Activated CD8-positive, alpha-beta T cell treated with anti-CD3 and anti-CD28 coated beads for 36 hours (primary cell): ENCODE measurements at regions of chr4 and their contacts with region 1.

Region 1: GRCh38 chr4:6546681-6547447 is 28.1 kb upstream of the MAN2B2 start:
- DNase-seq: peak; percentile 66
- ATAC-seq: peak; percentile 69
- H3K4me3 Mint-ChIP-seq: no peak overlapping the region
- H3K27ac Mint-ChIP-seq: no peak overlapping the region
- H3K4me1 Mint-ChIP-seq: no peaks in the 10 kb centered on the region
- H3K27me3 Mint-ChIP-seq: peaks cover 19% of the 10 kb centered on the region
- CTCF ChIP-seq: peak; percentile 91

Region 2: DNA sequence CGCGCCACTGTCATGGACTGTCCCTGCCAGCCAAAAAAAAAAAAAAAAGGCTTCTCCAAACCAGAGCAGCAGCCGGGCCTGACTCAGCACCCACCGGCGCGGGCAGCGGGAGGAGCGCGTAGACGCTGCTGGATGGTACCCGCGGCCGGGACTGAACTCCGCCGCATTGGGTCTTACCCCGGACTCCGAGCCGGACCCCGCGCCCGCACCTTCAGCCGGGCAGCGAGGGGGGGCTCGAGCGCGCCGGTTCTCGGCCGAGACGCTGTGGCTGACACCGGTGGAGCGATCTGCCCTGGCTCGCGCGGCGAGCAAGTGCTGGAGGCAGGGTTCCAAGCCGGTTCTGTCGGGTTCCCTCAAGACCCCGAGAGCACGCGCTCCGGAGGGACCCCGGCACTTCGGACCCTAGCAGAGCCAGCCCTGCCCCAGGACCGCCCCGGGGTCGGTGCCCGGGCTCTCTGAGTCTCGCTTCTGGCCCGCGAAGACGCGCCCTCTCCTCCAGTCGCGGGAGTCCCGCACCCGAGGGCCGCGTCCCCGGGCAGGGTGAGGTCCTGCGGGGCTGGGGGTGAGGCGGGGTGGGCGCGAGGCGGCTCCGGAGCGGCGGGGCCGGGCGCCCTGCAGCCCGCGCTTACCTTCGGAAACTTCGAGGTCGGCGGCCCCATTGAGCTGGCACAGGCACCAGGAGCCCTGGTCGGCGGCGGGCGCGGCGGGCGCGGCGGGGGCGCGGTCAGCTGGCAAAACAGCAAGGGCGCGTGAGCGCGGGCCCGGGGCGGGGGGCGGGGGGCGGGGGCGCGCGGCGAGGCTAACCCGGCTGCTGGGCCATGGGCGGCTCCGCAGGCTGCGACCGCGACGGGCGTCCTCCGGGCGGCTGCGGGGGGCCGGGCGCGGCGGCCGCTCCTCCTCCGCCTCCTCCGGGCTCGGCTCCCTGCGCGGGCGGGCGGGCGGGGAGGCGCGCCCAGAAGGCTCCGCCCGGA is 16.4 kb after region 1 on chr4:
- CTCF ChIA-PET with region 1: interaction called, 15 read pairs
- POLR2A ChIA-PET with region 1: no interaction called
- intact Hi-C with region 1: no loop called
- DNase-seq: no peak
- ATAC-seq: no peak
- H3K4me3 Mint-ChIP-seq: no peak overlapping the region
- H3K27ac Mint-ChIP-seq: no peak overlapping the region
- H3K4me1 Mint-ChIP-seq: peaks cover 9% of the 10 kb centered on the region
- H3K27me3 Mint-ChIP-seq: peaks cover 45% of the 10 kb centered on the region
- CTCF ChIP-seq: no peak

Region 3: DNA sequence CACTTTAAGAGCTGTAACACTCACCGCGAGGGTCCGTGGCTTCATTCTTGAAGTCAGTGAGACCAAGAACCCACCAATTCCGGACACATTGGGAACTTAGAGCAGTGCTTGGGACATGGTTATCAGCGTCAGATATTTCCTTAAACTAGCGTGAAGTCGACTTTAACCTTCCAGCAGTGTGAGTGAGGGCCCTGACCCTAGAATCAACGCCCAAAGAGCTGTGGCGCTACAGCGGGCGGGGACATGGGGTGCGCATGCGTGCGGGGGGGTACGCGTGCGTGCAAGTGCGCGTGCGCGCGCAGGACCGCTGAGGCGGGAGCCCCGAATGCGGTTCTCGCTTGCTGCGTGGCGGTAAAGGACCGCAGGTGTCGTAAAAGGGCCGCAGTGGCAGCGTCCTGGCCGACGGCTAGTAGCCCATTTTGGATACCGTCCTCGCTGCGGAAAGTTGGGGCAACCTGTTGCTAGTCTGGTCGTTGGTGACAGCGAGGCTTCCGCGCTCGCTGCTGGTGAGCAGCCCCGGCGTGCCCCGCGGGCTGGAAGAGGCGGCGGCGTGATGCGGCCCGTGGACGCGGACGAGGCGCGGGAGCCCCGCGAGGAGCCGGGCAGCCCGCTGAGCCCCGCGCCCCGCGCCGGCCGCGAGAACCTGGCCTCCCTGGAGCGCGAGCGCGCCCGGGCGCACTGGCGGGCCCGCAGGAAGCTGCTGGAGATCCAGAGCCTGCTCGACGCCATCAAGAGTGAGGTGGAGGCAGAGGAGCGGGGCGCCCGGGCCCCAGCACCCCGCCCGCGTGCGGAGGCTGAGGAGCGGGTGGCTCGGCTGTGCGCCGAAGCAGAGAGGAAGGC is 127.0 kb after region 1 on chr4:
- CTCF ChIA-PET with region 1: no interaction called
- POLR2A ChIA-PET with region 1: no interaction called
- intact Hi-C with region 1: no loop called
- DNase-seq: peak; percentile 95
- ATAC-seq: peak; percentile 81
- H3K4me3 Mint-ChIP-seq: peak overlapping the region; percentile 90
- H3K27ac Mint-ChIP-seq: peak overlapping the region; percentile 99
- H3K4me1 Mint-ChIP-seq: peaks cover 42% of the 10 kb centered on the region
- H3K27me3 Mint-ChIP-seq: no peaks in the 10 kb centered on the region
- CTCF ChIP-seq: no peak